Activated CD8-positive, alpha-beta memory T cell treated with anti-CD3 and anti-CD28 coated beads, Interleukin-2, amount 10 ng/mL, durations not matched to agents 7 days and 5 days (primary cell): ENCODE measurements at regions of chr18 and their contacts with region 1.

Region 1: GRCh38 chr18:839224-840022 is 27.4 kb upstream of the YES1 start:
- DNase-seq: peak; percentile 89
- ATAC-seq: peak; percentile 99
- H3K4me3 Mint-ChIP-seq: no peak overlapping the region
- H3K27ac Mint-ChIP-seq: no peak overlapping the region
- H3K4me1 Mint-ChIP-seq: peaks cover 4% of the 10 kb centered on the region
- H3K27me3 Mint-ChIP-seq: peaks cover 2% of the 10 kb centered on the region

Region 2: GRCh38 chr18:623761-624620 is 215.4 kb before region 1 on chr18:
- CTCF ChIA-PET with region 1: interaction called, 79 read pairs
- DNase-seq: peak; percentile 75
- ATAC-seq: peak; percentile 83
- H3K4me3 Mint-ChIP-seq: no peak overlapping the region
- H3K27ac Mint-ChIP-seq: no peak overlapping the region
- H3K4me1 Mint-ChIP-seq: no peaks in the 10 kb centered on the region
- H3K27me3 Mint-ChIP-seq: peaks cover 36% of the 10 kb centered on the region

Region 3: GRCh38 chr18:629269-630150 is 209.9 kb before region 1 on chr18:
- CTCF ChIA-PET with region 1: interaction called, 79 read pairs
- DNase-seq: no peak
- ATAC-seq: no peak
- H3K4me3 Mint-ChIP-seq: no peak overlapping the region
- H3K27ac Mint-ChIP-seq: no peak overlapping the region
- H3K4me1 Mint-ChIP-seq: no peaks in the 10 kb centered on the region
- H3K27me3 Mint-ChIP-seq: peaks cover 19% of the 10 kb centered on the region

Region 4: DNA sequence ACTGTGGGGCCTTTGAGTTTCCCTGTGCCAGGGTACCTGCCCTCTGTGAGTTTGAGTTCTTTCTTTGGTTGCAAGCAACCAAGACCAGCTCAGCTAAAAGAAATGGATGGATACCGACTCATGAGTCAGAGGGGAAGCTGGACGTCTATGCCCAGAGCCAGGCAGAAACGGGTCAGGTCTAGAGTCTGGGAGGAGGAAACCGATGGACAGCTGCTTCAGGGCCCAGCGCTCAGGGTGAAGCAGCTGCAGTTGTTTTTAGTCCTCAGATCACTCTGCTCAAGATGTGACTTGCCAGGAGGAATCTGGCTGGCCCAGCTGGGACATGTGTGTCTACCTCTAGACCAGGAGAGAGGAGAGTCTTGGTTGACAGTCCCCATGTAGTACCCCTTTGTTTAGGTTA is 192.1 kb before region 1 on chr18:
- CTCF ChIA-PET with region 1: no interaction called
- DNase-seq: no peak
- ATAC-seq: no peak
- H3K4me3 Mint-ChIP-seq: no peak overlapping the region
- H3K27ac Mint-ChIP-seq: no peak overlapping the region
- H3K4me1 Mint-ChIP-seq: peaks cover 16% of the 10 kb centered on the region
- H3K27me3 Mint-ChIP-seq: peaks cover 26% of the 10 kb centered on the region

Region 5: GRCh38 chr18:712401-713134 is 126.9 kb before region 1 on chr18 and contains the start of gene ENOSF1:
- CTCF ChIA-PET with region 1: interaction called, 43 read pairs
- DNase-seq: peak; percentile 91
- ATAC-seq: peak; percentile 90
- H3K4me3 Mint-ChIP-seq: peak within 1 kb of the TSS; percentile 85
- H3K27ac Mint-ChIP-seq: peak within 1 kb of the TSS; percentile 87
- H3K4me1 Mint-ChIP-seq: peaks cover 58% of the 10 kb centered on the region
- H3K27me3 Mint-ChIP-seq: no peaks in the 10 kb centered on the region
- total RNA-seq, gene ENOSF1: 79.3 to 84.3 TPM

Region 6: DNA sequence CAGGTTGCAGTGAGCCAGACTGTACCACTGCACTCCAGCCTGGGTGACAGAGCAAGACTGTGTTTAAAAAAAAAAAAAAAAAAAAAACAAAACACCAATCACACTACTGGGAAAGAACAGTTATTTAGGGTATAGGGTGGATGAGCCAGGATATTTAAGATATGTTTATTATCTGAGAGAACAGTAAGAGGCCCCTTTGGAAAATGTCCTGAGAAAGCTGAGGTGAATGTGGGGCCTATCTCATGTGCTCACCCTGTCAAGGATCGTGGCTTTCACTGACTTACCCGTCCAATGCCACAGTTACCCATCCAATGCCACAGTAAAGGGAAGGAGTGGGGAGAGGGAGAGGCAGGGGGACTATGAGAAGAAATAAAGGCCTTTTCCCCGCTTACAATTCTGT is 107.1 kb before region 1 on chr18:
- CTCF ChIA-PET with region 1: interaction called, 20 read pairs
- DNase-seq: no peak
- ATAC-seq: no peak
- H3K4me3 Mint-ChIP-seq: no peak overlapping the region
- H3K27ac Mint-ChIP-seq: no peak overlapping the region
- H3K4me1 Mint-ChIP-seq: peaks cover 10% of the 10 kb centered on the region
- H3K27me3 Mint-ChIP-seq: no peaks in the 10 kb centered on the region

Region 7: DNA sequence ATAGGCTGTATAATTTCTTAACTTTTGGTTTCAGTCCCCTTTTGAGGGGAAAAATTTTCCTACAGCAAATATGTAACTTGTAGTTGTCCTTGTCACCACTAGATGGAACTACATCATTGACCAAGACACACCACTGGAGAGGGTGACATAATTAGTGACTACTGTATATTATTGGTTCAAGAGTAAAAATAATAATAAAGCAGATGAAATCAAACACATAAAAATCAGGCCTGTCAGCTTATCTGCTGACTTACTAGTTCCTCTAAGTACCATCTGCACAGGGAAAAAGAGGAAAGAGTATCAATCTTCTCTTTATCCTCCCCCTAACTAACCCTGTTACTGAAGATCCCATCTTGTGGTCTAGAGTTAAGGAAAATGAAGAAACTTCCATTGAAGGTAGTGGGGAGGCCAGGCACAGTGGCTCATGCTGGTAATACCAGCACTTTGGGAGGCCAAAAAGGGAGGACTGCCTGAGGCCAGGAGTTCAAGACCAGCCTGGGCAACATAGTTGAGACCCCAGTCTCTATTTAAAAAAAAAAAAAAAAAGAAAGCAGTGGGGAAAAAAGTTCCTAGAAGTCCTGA is 97.4 kb before region 1 on chr18:
- CTCF ChIA-PET with region 1: interaction called, 131 read pairs
- DNase-seq: no peak
- ATAC-seq: peak; percentile 78
- H3K4me3 Mint-ChIP-seq: no peak overlapping the region
- H3K27ac Mint-ChIP-seq: peak overlapping the region; percentile 32
- H3K4me1 Mint-ChIP-seq: peaks cover 6% of the 10 kb centered on the region
- H3K27me3 Mint-ChIP-seq: no peaks in the 10 kb centered on the region

Region 8: GRCh38 chr18:812376-813171 is 26.8 kb before region 1 on chr18:
- CTCF ChIA-PET with region 1: interaction called, 10 read pairs
- DNase-seq: peak; percentile 89
- ATAC-seq: peak; percentile 69
- H3K4me3 Mint-ChIP-seq: peak overlapping the region; percentile 83
- H3K27ac Mint-ChIP-seq: peak overlapping the region; percentile 99
- H3K4me1 Mint-ChIP-seq: peaks cover 70% of the 10 kb centered on the region
- H3K27me3 Mint-ChIP-seq: no peaks in the 10 kb centered on the region

Region 9: GRCh38 chr18:903701-904100 is 64.3 kb after region 1 on chr18:
- CTCF ChIA-PET with region 1: no interaction called
- DNase-seq: peak; percentile 62
- ATAC-seq: no peak
- H3K4me3 Mint-ChIP-seq: no peak overlapping the region
- H3K27ac Mint-ChIP-seq: peak overlapping the region; percentile 54
- H3K4me1 Mint-ChIP-seq: peaks cover 15% of the 10 kb centered on the region
- H3K27me3 Mint-ChIP-seq: peaks cover 73% of the 10 kb centered on the region